ENCODE measurements at regions of chr18 and their contacts with region 1.

Region 1: DNA sequence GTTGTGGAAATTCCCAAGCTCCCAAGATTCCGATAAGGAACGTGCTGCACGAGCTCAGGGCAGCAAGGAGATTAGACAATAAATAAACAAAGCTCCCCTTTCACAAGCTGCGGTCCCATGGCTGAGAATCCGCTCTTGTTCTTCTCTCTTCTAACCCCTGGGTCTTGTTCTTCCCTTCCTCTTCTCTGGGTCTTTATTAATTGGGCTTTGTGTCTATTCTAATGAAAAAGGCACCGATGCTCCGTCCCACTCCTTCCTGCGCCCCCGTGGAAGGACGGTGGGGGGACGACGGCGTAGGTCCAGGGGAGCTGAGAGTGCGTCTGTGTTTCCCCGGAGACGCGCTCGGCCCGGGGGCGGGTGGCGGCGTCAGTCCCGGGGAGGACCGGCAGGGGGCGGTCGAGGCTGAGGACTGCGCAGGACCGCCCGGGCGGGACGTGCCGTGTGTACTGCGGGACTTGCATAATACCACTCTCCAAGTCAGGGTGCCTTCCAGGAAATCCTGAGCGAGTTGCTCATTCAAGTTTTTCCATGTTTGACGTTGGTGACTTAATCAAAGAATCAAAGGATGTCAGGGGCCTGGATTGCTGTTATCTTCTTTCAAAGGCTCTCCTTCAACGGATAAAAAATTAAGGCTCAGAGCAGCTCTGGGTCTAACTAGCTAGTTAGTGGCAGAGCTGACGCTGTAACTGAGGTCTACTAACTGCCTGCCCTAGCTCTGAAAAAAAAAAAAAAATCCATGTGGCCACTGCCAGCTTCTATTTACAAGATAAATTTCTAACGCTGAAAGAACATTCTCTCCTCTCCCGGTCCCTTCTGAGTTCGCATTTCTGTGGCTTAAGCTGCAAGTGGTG is 321.4 kb downstream of the TGIF1 start:
- DNase-seq: peak; percentile 90 to 96
- ATAC-seq: peak; percentile 100
- H3K4me3 ChIP-seq: peak overlapping the region; percentile 27 to 46
- H3K27ac ChIP-seq: peak overlapping the region in 1 of 2 donors; percentile 70
- H3K4me1 ChIP-seq: no peaks in the 10 kb centered on the region
- H3K27me3 ChIP-seq: no peaks in the 10 kb centered on the region

Region 2: GRCh38 chr18:3839481-3840075 is 68.2 kb after region 1 on chr18:
- intact Hi-C with region 1: no loop called
- DNase-seq: no peak
- ATAC-seq: no peak
- H3K4me3 ChIP-seq: no peak overlapping the region
- H3K27ac ChIP-seq: no peak overlapping the region
- H3K4me1 ChIP-seq: no peaks in the 10 kb centered on the region
- H3K27me3 ChIP-seq: no peaks in the 10 kb centered on the region

Region 3: GRCh38 chr18:3869848-3870247 is 98.5 kb after region 1 on chr18:
- intact Hi-C with region 1: loop called (anchors 2 to 5 kb)
- DNase-seq: no peak
- ATAC-seq: peak; percentile 61
- H3K4me3 ChIP-seq: no peak overlapping the region
- H3K27ac ChIP-seq: no peak overlapping the region
- H3K4me1 ChIP-seq: no peaks in the 10 kb centered on the region
- H3K27me3 ChIP-seq: no peaks in the 10 kb centered on the region

Region 4: DNA sequence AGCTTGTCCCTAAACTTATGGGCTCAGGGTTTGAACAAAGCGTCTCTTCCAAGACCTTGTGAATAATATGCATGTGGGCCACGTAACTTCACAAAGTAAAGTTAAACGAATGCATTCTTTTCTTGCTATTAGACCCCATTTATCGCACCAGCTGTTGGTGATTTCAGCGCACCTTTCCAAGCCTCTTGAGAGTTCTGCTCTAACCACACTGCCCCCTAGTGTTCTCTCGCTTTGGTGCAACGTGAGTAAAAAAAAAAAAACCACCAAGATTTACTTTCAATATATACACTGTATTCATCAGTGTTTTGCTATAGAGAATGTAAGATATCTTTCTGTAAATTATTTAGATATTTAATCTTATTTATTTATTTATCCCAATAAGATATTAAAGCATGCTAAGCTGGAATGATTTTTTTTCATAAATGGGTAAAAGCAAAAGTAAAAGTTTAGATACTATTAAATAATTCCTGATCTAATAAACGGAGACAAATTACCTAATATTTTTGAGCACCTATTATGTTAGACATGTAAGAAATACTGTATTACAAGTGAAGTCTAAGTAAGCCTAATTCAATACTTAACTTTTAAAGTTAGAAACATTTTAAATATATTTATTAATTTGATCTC is 224.2 kb after region 1 on chr18:
- intact Hi-C with region 1: loop called in 1 of 2 experiments (anchors 2 kb)
- DNase-seq: peak in 1 of 2 donors; percentile 58
- ATAC-seq: no peak
- H3K4me3 ChIP-seq: peak overlapping the region; percentile 12 to 48
- H3K27ac ChIP-seq: no peak overlapping the region
- H3K4me1 ChIP-seq: no peaks in the 10 kb centered on the region
- H3K27me3 ChIP-seq: no peaks in the 10 kb centered on the region

Region 5: DNA sequence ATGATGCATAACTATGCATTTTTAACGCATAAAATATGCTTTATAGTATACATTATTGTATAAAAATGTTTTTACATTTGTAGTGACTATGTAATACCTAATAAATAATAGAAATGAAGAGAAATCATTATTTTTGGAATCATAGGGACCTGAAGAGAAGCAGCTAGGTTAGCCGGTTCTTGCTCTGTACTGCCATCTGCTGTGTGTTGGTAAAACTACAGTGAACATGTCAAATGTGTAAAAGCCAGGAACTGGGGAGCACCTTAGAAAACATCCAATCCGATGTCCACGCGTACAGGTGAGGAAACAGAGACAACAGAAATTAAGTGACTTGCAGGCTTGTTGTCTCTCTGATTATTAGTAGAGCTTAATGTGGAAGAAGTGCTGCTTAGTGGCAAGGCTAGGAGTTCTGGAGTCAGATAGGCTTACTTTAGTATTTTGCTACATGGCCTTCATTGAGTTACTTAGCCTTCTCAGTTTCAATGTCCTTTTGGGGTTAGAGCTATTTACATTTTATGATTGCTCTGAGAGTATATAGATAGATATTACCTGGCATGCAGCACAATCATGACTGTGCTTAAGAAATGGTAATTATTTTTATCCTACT is 297.3 kb after region 1 on chr18:
- intact Hi-C with region 1: loop called in 1 of 2 experiments (anchors 5 kb)
- DNase-seq: no peak
- ATAC-seq: peak; percentile 81
- H3K4me3 ChIP-seq: no peak overlapping the region
- H3K27ac ChIP-seq: no peak overlapping the region
- H3K4me1 ChIP-seq: no peaks in the 10 kb centered on the region
- H3K27me3 ChIP-seq: no peaks in the 10 kb centered on the region